Vagina (tissue), 2 donors: ENCODE measurements at regions of chr4 and their contacts with region 1.

Region 1: GRCh38 chr4:77248810-77249209 is 91.8 kb downstream of the CCNG2 start:
- DNase-seq: no peak
- H3K4me3 ChIP-seq: no peak overlapping the region
- H3K27ac ChIP-seq: no peak overlapping the region
- H3K4me1 ChIP-seq: no peaks in the 10 kb centered on the region
- H3K27me3 ChIP-seq: no peaks in the 10 kb centered on the region
- CTCF ChIP-seq: no peak
- POLR2A ChIP-seq: no peak

Region 2: GRCh38 chr4:76007094-76007862 is 1241.5 kb before region 1 on chr4 and contains the start of gene CXCL9:
- intact Hi-C with region 1: loop called (anchors 5 kb)
- DNase-seq: no peak
- H3K4me3 ChIP-seq: no peak within 1 kb of the TSS
- H3K27ac ChIP-seq: no peak within 1 kb of the TSS
- H3K4me1 ChIP-seq: peaks cover 11% of the 10 kb centered on the region
- H3K27me3 ChIP-seq: no peaks in the 10 kb centered on the region
- CTCF ChIP-seq: no peak
- POLR2A ChIP-seq: no peak
- total RNA-seq, gene CXCL9: 0.74 TPM

Region 3: GRCh38 chr4:77025643-77026321 is 223.0 kb before region 1 on chr4:
- intact Hi-C with region 1: no loop called
- DNase-seq: no peak
- H3K4me3 ChIP-seq: no peak overlapping the region
- H3K27ac ChIP-seq: no peak overlapping the region
- H3K4me1 ChIP-seq: peaks cover 15% of the 10 kb centered on the region
- H3K27me3 ChIP-seq: no peaks in the 10 kb centered on the region
- CTCF ChIP-seq: no peak
- POLR2A ChIP-seq: no peak

Region 4: DNA sequence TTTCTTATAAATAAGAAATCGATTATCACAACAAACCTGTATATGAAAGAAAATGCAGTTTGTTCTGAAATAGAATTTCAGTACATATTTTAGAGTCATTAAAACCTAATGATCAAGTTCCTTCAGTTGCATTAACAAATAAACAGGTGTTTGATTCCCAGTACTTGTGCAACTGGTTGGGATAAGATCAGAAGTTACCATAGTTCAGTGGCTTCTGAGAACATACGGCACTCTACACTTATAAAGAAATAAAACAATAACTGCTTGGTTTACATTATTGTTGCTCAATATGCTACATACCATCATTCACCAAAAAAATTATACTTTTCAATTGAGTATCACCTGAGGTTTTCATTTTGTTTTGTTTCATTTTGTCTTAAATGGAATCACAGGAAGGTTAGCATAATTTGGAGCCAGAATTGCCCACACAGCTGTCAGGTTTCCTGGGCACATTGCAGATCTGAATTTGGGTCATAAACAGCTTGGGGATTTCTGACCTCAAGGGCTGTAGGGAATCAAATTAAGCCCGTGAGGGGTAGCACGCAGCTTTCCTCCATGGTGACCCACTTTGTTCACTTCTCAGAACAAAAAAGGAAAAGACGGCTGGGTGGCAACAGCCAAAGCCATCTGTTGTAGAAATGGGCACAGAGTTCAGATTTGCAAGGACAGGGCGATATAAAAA is 106.7 kb before region 1 on chr4:
- intact Hi-C with region 1: no loop called
- DNase-seq: no peak
- H3K4me3 ChIP-seq: no peak overlapping the region
- H3K27ac ChIP-seq: no peak overlapping the region
- H3K4me1 ChIP-seq: peaks cover 20% of the 10 kb centered on the region
- H3K27me3 ChIP-seq: no peaks in the 10 kb centered on the region
- CTCF ChIP-seq: no peak
- POLR2A ChIP-seq: no peak